Colonic mucosa (tissue), 4 donors: ENCODE measurements at regions of chr3 and their contacts with region 1.

Region 1: GRCh38 chr3:185929192-185930151 is 8.3 kb downstream of the TRA2B start:
- DNase-seq: no peak
- H3K4me3 ChIP-seq: no peak overlapping the region
- H3K27ac ChIP-seq: peak overlapping the region; percentile 67
- H3K4me1 ChIP-seq: peaks cover 41% of the 10 kb centered on the region
- H3K27me3 ChIP-seq: no peaks in the 10 kb centered on the region
- CTCF ChIP-seq: no peak

Region 2: DNA sequence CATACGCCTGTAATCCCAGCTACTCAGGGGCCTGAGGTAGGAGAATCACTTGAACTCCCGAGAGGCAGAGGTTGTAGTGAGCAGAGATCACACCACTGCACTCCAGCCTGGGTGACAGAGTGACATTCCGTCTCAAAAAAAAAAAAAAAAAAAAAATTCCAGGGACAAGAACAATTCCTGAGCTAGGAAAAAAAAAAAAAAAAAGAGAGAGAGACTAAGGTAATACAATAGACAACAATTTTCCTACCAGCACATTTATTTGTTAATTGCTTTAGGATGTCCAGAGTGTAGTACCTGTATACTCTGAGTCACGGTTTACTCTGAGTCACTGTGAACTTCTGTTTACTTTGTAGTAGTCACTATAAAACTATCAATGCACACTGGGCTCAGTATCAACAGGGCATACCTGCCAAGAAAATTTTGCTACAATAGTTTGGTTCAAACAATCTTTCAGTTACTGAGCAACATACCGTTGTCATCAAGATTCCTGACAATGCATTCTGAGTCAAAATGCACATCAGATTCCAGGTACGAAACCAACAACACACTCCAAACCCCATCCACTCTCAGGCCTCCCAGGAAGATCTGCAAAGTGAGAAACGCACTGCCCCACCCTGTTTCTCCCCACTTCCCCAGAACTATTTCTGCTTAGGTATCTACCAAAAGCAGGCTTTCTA is 132.9 kb before region 1 on chr3:
- intact Hi-C with region 1: no loop called
- DNase-seq: peak; percentile 54
- H3K4me3 ChIP-seq: no peak overlapping the region
- H3K27ac ChIP-seq: peak overlapping the region; percentile 73
- H3K4me1 ChIP-seq: peaks cover 10% of the 10 kb centered on the region
- H3K27me3 ChIP-seq: no peaks in the 10 kb centered on the region
- CTCF ChIP-seq: no peak

Region 3: DNA sequence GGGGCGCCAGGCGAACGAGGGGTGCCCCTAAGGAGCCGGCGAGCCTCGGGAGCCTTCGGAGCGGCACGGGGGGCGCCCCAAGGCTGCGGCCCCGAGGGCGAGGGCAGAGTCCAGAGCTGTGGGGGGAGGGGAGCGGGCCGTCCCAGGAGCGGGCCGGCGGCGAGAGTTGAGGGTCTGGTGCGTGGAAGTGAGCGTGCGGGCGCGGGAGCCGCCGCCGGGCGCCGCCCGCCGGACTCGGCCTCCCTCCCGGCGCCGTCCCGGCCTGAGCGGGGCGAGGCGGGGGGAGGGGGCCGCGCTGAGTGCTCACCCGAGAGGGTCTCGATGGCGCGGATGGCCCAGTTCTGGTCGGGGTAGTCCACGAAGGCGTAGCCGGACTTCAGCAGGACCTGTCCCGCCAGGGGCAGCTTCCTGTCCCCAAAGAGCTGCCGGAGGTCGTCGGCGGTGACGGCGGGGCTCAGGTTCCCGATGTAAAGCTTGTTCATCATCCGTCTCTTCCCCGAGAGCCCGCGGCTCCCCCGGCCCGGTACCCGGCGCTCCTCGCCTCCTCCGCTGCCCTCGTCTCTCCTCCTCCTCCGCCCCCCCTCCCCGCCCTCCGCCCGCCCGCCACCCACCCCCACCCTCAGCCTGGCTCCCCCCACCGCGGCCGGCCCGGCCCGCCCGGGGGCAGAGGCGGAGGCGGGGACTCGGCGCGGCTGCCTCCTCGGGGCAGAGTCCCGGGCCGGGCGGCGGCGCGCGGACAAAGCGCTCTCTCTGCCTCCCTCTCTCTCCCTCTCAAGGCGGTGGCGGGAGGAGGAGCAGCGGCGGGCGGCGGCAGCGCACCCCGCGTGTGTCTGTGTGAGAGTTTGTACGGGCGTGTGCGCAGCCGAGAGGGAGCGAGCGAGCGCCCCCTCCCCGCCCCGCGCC is 104.7 kb before region 1 on chr3 and contains the start of gene IGF2BP2:
- intact Hi-C with region 1: loop called (anchors 5 kb)
- DNase-seq: peak; percentile 85
- H3K4me3 ChIP-seq: peak within 1 kb of the TSS; percentile 77
- H3K27ac ChIP-seq: peak within 1 kb of the TSS; percentile 89
- H3K4me1 ChIP-seq: no peaks in the 10 kb centered on the region
- H3K27me3 ChIP-seq: no peaks in the 10 kb centered on the region
- CTCF ChIP-seq: no peak
- total RNA-seq, gene IGF2BP2: 48.7 to 61.2 TPM

Region 4: DNA sequence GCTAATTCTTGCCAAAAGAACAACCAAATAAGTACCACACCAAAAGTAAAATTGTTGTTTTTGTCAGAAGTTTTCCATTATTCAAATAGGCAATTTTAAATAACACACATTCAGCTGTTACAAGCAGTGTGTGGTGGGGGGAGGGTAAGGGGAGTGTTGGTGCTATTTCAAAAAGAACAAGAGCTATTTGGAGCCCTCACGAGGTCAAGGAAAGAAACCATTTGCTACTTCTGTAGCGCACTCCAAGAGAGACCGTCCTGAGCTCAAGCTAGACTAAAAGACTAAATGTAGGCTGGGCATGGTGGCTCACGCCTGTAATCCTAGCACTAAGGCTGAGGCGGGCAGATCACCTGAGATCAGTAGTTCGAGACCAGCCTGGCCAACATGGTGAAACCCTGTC is 83.4 kb before region 1 on chr3:
- intact Hi-C with region 1: no loop called
- DNase-seq: no peak
- H3K4me3 ChIP-seq: no peak overlapping the region
- H3K27ac ChIP-seq: no peak overlapping the region
- H3K4me1 ChIP-seq: no peaks in the 10 kb centered on the region
- H3K27me3 ChIP-seq: no peaks in the 10 kb centered on the region
- CTCF ChIP-seq: no peak